GM12878 (cell line): ENCODE measurements at regions of chr1 and their contacts with region 1.

Region 1: GRCh38 chr1:42784946-42785693 is at the start of gene TMEM269:
- DNase-seq: no peak
- ATAC-seq: peak; percentile 53; the same call in 2 of the 3 replicates
- H3K4me3 ChIP-seq: no peak within 1 kb of the TSS
- H3K27ac ChIP-seq: no peak within 1 kb of the TSS
- H3K4me1 ChIP-seq: peaks cover 3% of the 10 kb centered on the region; the same call in 1 of the 2 replicates
- H3K27me3 ChIP-seq: no peaks in the 10 kb centered on the region
- CTCF ChIP-seq: no peak
- EP300 ChIP-seq: no peak
- POLR2A ChIP-seq: no peak
- RAD21 ChIP-seq: no peak
- polyA plus RNA-seq, gene TMEM269: 0.02 to 0.06 TPM

Region 2: DNA sequence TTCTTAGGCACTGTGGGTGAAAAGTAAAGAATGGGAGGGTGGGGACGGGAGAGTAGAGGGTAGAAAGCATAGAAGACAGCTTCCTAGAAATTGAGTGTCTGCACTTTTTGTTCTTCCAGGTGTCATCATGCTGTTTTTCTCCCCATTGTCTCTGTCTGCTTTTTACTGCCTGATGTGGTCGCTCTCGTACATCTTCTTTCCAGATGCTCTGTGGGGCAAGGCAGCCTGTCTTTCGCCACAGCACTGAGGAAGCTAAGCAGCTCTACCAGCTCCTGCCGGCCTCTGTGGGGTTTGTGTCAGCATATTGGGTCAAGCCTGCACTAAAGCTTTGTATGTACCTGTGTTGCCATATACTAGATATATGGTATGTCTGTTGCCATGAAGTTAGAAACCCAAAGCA is 12.9 kb after region 1 on chr1:
- CTCF ChIA-PET with region 1: no interaction called
- POLR2A ChIA-PET with region 1: no interaction called
- RAD21 ChIA-PET with region 1: no interaction called
- SMC1A ChIA-PET with region 1: no interaction called
- in situ Hi-C with region 1: no loop called
- intact Hi-C with region 1: no loop called
- DNase-seq: no peak
- ATAC-seq: no peak
- H3K4me3 ChIP-seq: no peak overlapping the region
- H3K27ac ChIP-seq: no peak overlapping the region
- H3K4me1 ChIP-seq: no peaks in the 10 kb centered on the region
- H3K27me3 ChIP-seq: no peaks in the 10 kb centered on the region
- CTCF ChIP-seq: no peak
- EP300 ChIP-seq: no peak
- POLR2A ChIP-seq: no peak
- RAD21 ChIP-seq: no peak

Region 3: DNA sequence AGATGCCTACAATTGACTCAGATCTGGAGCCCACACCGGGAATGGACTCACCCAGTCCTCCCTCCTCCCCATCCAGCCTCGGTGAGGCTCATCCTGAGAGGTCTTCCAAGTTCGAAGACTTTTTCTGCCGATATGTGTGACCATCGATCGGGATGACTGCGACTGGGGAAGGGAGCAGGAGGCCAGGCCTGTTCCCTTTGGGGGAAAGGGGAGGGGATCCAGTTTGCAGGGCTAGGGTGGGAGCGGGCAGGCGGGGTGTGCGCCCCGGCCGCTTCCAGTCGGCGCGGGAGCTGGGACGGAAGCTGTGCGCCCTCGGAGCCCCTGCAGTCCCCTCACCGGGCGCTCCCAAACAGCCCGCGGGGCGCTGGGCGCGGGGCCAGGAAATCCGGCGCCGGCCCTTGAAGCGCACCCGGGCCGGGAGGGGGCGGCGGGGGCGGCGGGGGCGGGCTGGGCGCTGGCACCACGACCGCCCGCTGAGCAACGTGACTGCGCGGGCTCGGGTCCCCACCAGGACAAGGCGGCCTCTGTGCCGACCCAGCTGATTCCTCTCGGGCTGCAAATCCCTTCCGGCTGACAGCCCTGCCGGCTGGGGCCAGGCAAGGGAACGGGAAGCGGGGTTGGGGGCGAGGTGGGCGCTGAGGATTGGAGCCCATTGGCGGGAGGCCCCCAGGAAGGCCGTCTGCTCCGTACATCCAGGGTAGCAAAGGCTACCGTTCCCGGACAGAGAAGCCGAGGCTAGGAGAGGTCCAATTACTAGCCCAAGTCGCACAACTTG is 283.0 kb after region 1 on chr1:
- CTCF ChIA-PET with region 1: interaction called, 39 read pairs
- POLR2A ChIA-PET with region 1: no interaction called
- RAD21 ChIA-PET with region 1: interaction called, 92 read pairs
- SMC1A ChIA-PET with region 1: interaction called, 53 read pairs
- in situ Hi-C with region 1: loop called (anchors 5 kb)
- intact Hi-C with region 1: no loop called
- DNase-seq: no peak
- ATAC-seq: no peak; the same call in 1 of the 3 replicates
- H3K4me3 ChIP-seq: no peak overlapping the region
- H3K27ac ChIP-seq: no peak overlapping the region
- H3K4me1 ChIP-seq: peaks cover 5% of the 10 kb centered on the region; the same call in 1 of the 2 replicates
- H3K27me3 ChIP-seq: peaks cover 0 to 3% of the 10 kb centered on the region in 2 experiments; a peak in 1 of 4 replicates
- CTCF ChIP-seq: no peak
- EP300 ChIP-seq: no peak
- POLR2A ChIP-seq: no peak
- RAD21 ChIP-seq: no peak